Activated T-helper 2 cell treated with anti-CD3 and anti-CD28 coated beads, Interferon-gamma antibody, Interleukin-2, Interleukin-4, amounts not matched to agents 10 μg/mL and 5 μg/mL and 100 μg/mL, durations not matched to agents 14 hours and 24 hours and 36 hours (primary cell): ENCODE measurements at regions of chr2 and their contacts with region 1.

Region 1: GRCh38 chr2:191677646-191678436 is at the start of gene NABP1:
- DNase-seq: peak; percentile 97
- H3K4me3 Mint-ChIP-seq: peak within 1 kb of the TSS; percentile 84
- H3K27ac Mint-ChIP-seq: peak within 1 kb of the TSS; percentile 99
- H3K4me1 Mint-ChIP-seq: peaks cover 51% of the 10 kb centered on the region
- H3K27me3 Mint-ChIP-seq: no peaks in the 10 kb centered on the region
- total RNA-seq, gene NABP1: 39.9 and 40.0 TPM in 2 replicates

Region 2: GRCh38 chr2:191020221-191020741 is 657.6 kb before region 1 on chr2:
- intact Hi-C with region 1: loop called (anchors 5 kb)
- DNase-seq: peak; percentile 96
- H3K4me3 Mint-ChIP-seq: no peak overlapping the region
- H3K27ac Mint-ChIP-seq: no peak overlapping the region
- H3K4me1 Mint-ChIP-seq: peaks cover 35% of the 10 kb centered on the region
- H3K27me3 Mint-ChIP-seq: no peaks in the 10 kb centered on the region

Region 3: DNA sequence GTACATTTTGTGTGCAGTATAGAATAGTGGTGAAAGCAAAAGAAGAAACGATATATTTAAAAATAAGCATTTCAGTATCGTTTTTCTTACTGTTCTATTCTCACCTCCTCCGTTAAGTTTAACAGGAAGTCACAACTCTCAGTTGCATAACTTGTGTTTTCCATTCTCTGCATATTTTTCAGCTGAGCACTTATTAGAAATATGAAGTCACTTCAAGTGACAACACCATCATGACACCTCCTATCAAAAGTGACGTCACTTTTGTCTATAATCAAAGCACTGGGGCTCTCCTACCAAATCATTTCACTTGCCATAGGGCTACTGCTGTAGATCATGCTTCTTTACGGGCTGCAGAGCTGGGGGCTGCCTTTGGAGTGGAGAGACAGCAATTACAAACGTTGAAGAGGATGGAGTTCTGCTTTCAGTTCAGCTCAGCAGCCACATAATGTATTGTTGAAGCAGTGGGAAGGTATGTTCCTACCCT is 563.4 kb before region 1 on chr2:
- intact Hi-C with region 1: loop called (anchors 2 kb)
- DNase-seq: peak; percentile 40
- H3K4me3 Mint-ChIP-seq: peak overlapping the region; percentile 64
- H3K27ac Mint-ChIP-seq: peak overlapping the region; percentile 94
- H3K4me1 Mint-ChIP-seq: peaks cover 76% of the 10 kb centered on the region
- H3K27me3 Mint-ChIP-seq: no peaks in the 10 kb centered on the region

Region 4: DNA sequence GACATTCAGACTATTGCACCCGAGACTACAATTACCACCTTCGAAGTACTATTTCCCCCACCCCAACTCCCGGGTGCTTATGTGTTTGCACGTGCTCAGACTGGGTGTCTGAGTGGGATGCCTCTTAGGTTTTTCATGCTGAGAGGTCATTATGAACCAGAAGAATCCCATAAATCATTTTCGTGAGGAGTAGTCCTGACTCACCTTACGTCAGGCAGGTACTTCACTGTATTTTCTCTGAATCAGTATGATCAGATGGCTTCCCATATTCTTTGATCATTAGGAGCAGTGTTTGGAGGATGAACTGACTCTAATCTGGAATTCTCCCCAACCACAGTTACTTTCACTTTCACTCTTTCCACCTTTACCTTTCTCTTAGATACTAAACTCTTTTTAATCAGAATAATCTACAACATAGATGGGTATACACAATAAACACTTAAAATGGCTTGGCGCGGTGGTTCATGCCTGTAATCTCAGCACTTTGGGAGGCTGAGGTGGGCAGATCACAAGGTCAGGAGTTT is 488.7 kb before region 1 on chr2:
- intact Hi-C with region 1: loop called (anchors 5 kb)
- DNase-seq: no peak
- H3K4me3 Mint-ChIP-seq: peak overlapping the region; percentile 1
- H3K27ac Mint-ChIP-seq: no peak overlapping the region
- H3K4me1 Mint-ChIP-seq: peaks cover 40% of the 10 kb centered on the region
- H3K27me3 Mint-ChIP-seq: no peaks in the 10 kb centered on the region

Region 5: DNA sequence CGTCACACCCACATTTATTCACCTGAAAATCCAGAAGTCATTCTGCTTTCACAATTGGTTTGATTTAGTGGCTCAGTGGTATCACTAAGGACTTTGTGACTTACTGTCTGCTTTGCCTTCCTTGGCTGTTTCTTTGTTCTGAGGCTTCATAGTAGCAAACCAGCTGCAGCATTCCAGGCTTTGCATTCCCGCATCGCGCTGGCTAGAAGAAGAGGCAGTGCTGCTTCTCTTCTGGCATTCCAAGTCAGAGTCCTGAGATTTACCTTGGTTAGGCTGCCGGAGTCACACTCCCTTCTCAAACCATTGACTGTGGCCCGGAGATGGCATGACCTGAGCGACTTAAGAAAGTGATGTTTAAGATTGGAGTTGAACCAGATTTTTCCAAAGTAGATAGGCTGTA is 397.5 kb before region 1 on chr2:
- intact Hi-C with region 1: no loop called
- DNase-seq: no peak
- H3K4me3 Mint-ChIP-seq: no peak overlapping the region
- H3K27ac Mint-ChIP-seq: no peak overlapping the region
- H3K4me1 Mint-ChIP-seq: no peaks in the 10 kb centered on the region
- H3K27me3 Mint-ChIP-seq: no peaks in the 10 kb centered on the region

Region 6: GRCh38 chr2:191617575-191617974 is 60.3 kb before region 1 on chr2:
- intact Hi-C with region 1: loop called (anchors 1 kb)
- DNase-seq: peak; percentile 55
- H3K4me3 Mint-ChIP-seq: no peak overlapping the region
- H3K27ac Mint-ChIP-seq: peak overlapping the region; percentile 79
- H3K4me1 Mint-ChIP-seq: peaks cover 46% of the 10 kb centered on the region
- H3K27me3 Mint-ChIP-seq: no peaks in the 10 kb centered on the region

Region 7: GRCh38 chr2:191650896-191651773 is 26.7 kb before region 1 on chr2:
- intact Hi-C with region 1: loop called (anchors 1 kb)
- DNase-seq: no peak
- H3K4me3 Mint-ChIP-seq: no peak overlapping the region
- H3K27ac Mint-ChIP-seq: peak overlapping the region; percentile 26
- H3K4me1 Mint-ChIP-seq: peaks cover 14% of the 10 kb centered on the region
- H3K27me3 Mint-ChIP-seq: no peaks in the 10 kb centered on the region

Region 8: DNA sequence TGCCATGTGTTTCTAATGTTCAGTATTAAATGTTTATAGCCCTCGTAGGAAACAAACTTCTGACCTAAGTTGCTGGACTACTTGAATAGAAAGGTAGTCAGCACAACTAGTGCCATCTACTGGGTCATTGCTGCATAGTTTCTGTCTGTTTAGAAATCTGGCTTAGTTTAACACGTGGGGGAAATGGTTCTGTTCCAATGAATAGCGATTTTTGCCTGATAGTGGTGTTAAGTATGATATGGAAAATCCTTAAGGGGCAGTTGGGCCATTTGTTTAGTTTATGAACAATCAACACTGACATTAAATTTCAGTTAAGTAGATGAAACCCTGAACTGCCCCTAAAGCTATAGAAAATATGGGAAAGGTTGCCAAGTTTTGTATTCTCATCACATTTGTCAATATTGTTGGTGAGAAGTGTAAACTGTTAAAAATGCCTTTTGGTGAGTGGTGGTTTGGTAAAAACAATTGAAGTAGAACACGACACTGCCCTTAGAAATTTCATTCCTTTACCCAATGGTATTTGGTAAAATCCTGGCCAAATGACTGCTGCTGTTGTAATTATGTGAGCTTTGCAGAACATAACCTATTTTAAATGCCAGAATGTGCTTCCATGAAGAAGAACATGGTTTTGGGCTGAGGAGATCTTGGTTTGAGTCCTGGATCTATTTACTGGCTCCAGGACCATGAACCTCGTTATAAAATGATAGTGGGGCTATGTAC is 13.3 kb after region 1 on chr2:
- intact Hi-C with region 1: loop called (anchors 1 kb)
- DNase-seq: no peak
- H3K4me3 Mint-ChIP-seq: no peak overlapping the region
- H3K27ac Mint-ChIP-seq: peak overlapping the region; percentile 70
- H3K4me1 Mint-ChIP-seq: peaks cover 43% of the 10 kb centered on the region
- H3K27me3 Mint-ChIP-seq: no peaks in the 10 kb centered on the region

Region 9: GRCh38 chr2:192230889-192231453 is 553.1 kb after region 1 on chr2:
- intact Hi-C with region 1: no loop called
- DNase-seq: no peak
- H3K4me3 Mint-ChIP-seq: no peak overlapping the region
- H3K27ac Mint-ChIP-seq: no peak overlapping the region
- H3K4me1 Mint-ChIP-seq: no peaks in the 10 kb centered on the region
- H3K27me3 Mint-ChIP-seq: no peaks in the 10 kb centered on the region